ENCODE measurements at regions of chr1 and their contacts with region 1.

Region 1: GRCh38 chr1:51192213-51192843 is 43.7 kb upstream of the RNF11 start:
- DNase-seq: peak; percentile 13 to 91 (median 74)

Region 2: GRCh38 chr1:50774759-50775351 is 417.5 kb before region 1 on chr1:
- intact Hi-C with region 1: loop called (anchors 10 kb)
- DNase-seq: peak in 14 of 42 donors; percentile 12 to 65 (median 28)

Region 3: DNA sequence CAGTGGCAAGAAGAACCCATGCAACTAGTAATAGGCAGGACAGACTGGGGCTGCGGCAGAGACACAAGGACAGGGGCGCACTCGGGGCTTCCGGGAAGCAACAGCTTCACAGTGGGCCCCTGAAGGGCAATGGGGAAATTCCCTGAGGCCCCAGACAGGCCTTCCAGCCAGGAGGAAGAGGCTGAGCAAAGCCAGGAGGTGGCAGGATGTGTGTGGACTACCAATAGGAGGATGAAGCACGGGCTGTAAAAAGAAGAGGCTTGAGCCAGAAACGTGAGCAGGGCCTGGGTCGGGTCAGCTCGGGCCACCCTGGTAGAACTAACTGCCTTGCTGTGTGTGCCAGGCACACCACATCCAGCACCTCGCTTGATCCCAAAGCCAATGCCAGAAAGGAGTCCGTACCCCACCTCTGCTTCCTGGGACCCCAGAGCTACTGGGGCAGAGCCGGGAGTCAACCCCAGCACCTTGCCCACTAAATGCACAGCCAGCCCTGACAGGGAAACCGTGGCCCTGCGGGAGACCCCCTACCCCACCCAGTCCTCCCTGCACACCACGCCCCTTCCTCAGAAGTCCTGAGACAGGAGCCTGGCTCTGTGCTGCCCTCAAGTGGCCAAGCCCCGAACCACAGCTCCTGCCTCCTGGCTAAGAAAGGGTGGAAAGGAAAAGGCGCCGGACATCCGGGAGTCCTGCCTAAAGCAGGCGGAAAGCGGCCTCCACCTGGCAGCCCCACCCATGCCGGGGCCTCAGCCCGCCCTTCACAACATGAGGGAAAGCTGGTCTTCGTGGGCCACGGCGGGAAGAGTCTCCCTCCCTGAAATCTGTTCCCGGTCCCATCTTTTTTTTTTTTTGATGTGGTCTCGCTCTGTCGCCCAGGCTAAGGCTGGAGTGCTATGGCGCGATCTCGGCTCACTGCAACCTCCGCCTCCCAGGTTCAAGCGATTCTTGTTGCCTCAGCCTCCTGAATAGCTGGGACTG is 104.3 kb after region 1 on chr1:
- intact Hi-C with region 1: loop called (anchors 5 kb)
- DNase-seq: peak; percentile 67 to 92 (median 84)

Measured in head of caudate nucleus (tissue), 42 donors.